Heart right ventricle (tissue), 16 donors: ENCODE measurements at regions of chr6 and their contacts with region 1.

Region 1: GRCh38 chr6:111367393-111368088 is 115.5 kb downstream of the REV3L start:
- DNase-seq: no peak
- ATAC-seq: no peak
- H3K4me3 ChIP-seq: no peak overlapping the region
- H3K27ac ChIP-seq: no peak overlapping the region
- H3K4me1 ChIP-seq: no peaks in the 10 kb centered on the region
- H3K27me3 ChIP-seq: no peaks in the 10 kb centered on the region
- CTCF ChIP-seq: peak in 1 of 9 donors; percentile 8

Region 2: GRCh38 chr6:111399626-111400025 is 32.1 kb after region 1 on chr6:
- intact Hi-C with region 1: loop called in 1 of 10 experiments (anchors 5 kb)
- DNase-seq: no peak
- ATAC-seq: no peak
- H3K4me3 ChIP-seq: no peak overlapping the region
- H3K27ac ChIP-seq: no peak overlapping the region
- H3K4me1 ChIP-seq: no peaks in the 10 kb centered on the region
- H3K27me3 ChIP-seq: no peaks in the 10 kb centered on the region
- CTCF ChIP-seq: no peak